Activated naive CD4-positive, alpha-beta T cell treated with anti-CD3 and anti-CD28 coated beads for 36 hours (primary cell): ENCODE measurements at regions of chr9 and their contacts with region 1.

Region 1: GRCh38 chr9:78439190-78439865 is 142.4 kb downstream of the PSAT1 start:
- DNase-seq: peak; percentile 79
- H3K4me3 Mint-ChIP-seq: no peak overlapping the region
- H3K27ac Mint-ChIP-seq: no peak overlapping the region
- H3K4me1 Mint-ChIP-seq: peaks cover 4% of the 10 kb centered on the region
- H3K27me3 Mint-ChIP-seq: peaks cover 21% of the 10 kb centered on the region

Region 2: DNA sequence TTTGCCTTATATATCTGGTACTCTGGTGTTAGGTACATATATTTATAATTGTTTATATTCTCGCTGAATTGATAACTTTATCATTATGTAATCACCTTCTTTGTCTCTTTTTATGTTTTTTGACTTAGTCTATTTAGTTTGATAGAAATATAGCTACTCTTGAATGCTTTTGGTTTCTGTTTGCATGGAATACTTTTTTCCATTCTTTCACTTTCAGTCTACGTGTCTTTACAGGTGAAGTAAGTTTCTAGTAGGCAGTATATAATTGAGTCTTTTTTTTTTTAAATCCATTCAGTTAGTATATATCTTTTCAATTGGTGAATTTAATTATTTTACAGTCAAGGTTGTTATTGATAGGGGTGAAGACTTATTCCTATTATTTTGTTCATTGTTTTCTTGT is 10.7 kb before region 1 on chr9:
- CTCF ChIA-PET with region 1: interaction called, 11 read pairs
- intact Hi-C with region 1: no loop called
- DNase-seq: no peak
- H3K4me3 Mint-ChIP-seq: no peak overlapping the region
- H3K27ac Mint-ChIP-seq: no peak overlapping the region
- H3K4me1 Mint-ChIP-seq: peaks cover 3% of the 10 kb centered on the region
- H3K27me3 Mint-ChIP-seq: peaks cover 6% of the 10 kb centered on the region

Region 3: GRCh38 chr9:78601957-78602565 is 162.7 kb after region 1 on chr9:
- CTCF ChIA-PET with region 1: no interaction called
- intact Hi-C with region 1: loop called (anchors 1 kb)
- DNase-seq: peak; percentile 45
- H3K4me3 Mint-ChIP-seq: no peak overlapping the region
- H3K27ac Mint-ChIP-seq: no peak overlapping the region
- H3K4me1 Mint-ChIP-seq: no peaks in the 10 kb centered on the region
- H3K27me3 Mint-ChIP-seq: peaks cover 3% of the 10 kb centered on the region

Region 4: GRCh38 chr9:78612091-78612490 is 172.8 kb after region 1 on chr9:
- CTCF ChIA-PET with region 1: no interaction called
- intact Hi-C with region 1: no loop called
- DNase-seq: no peak
- H3K4me3 Mint-ChIP-seq: no peak overlapping the region
- H3K27ac Mint-ChIP-seq: no peak overlapping the region
- H3K4me1 Mint-ChIP-seq: no peaks in the 10 kb centered on the region
- H3K27me3 Mint-ChIP-seq: no peaks in the 10 kb centered on the region